AG04450 (cell line): ENCODE measurements at regions of chr15 and their contacts with region 1.

Region 1: DNA sequence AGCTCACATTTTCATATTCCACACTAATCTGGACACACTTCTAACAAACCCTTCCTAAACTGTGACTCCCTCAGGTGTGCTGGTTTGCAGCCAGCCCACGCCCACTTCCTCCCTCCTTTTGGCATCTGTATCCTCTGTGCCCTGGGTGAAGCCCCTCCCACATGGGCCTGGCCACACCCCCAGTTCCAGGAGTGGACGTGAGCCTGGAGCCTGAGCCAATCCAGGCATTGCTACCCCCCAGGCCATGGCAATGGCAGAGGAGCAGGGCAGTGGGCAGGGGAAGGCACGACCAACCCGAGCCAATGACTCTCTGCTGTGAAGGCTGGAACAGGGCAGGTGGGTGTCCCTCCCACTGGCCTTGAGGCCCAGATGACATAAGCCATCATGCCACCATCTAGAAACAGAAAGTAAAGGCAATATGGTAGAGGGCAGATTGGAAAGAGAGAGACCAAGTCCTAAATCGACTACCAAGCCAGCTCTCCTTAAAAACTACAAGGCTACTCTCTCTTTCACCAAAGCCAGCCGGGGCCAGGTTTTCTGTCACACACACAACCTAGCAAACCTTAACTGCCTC is 18.6 kb downstream of the FAM174B start:
- DNase-seq: no peak
- H3K4me3 ChIP-seq: no peak overlapping the region
- H3K27ac ChIP-seq: no peak overlapping the region
- H3K27me3 ChIP-seq: no peaks in the 10 kb centered on the region
- CTCF ChIP-seq: no peak

Region 2: DNA sequence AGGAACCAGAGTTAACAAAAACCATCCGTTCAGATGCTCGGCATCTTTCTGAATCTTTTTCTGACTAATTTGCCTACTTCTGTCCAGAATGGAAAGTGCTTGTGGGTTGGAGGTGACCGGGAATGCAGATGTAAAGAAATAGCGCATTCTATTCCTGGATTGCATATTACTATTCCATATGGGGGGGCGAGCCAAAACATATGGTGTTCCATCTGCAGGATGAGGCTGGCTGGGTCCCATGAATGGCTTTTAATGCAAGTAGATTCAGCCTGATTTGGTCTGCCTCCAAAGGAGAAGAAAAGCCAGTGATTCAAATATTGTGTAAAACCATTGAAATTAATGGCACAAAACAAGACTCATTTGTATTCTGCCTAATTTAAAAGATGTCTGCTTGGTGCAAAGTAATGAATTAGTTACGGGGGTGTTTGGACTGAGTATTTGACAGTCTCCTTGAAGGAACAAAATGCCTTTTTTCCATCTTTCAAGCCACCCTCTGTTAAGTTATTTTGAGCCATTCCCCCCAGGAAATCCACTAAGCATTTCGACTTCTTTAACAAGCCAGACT is 144.4 kb before region 1 on chr15:
- CTCF ChIA-PET with region 1: no interaction called
- POLR2A ChIA-PET with region 1: no interaction called
- DNase-seq: no peak
- H3K4me3 ChIP-seq: no peak overlapping the region
- H3K27ac ChIP-seq: no peak overlapping the region
- H3K27me3 ChIP-seq: peaks cover 4% of the 10 kb centered on the region
- CTCF ChIP-seq: no peak

Region 3: DNA sequence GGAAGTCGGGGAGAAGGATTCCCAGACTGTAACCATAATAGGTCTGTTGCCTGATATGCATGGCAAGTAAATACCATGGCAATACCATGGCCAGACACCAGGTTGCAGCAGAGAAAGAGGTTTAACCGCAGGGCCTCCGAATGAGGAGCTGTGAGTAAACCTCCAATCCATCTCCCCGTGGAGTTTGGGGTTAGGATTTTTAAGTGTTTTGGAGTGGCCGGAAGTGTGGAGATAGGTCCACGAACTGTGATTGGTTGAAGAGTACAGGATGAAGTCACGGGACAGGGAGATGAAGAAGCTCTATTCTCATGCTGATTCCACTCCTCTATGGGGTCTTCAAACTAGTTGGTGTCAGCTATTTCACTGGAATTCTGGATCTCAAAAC is 115.4 kb before region 1 on chr15:
- CTCF ChIA-PET with region 1: no interaction called
- POLR2A ChIA-PET with region 1: no interaction called
- DNase-seq: peak; percentile 55
- H3K4me3 ChIP-seq: no peak overlapping the region
- H3K27ac ChIP-seq: no peak overlapping the region
- H3K27me3 ChIP-seq: no peaks in the 10 kb centered on the region
- CTCF ChIP-seq: peak; percentile 79

Region 4: GRCh38 chr15:92603743-92604470 is 33.1 kb before region 1 on chr15:
- CTCF ChIA-PET with region 1: no interaction called
- POLR2A ChIA-PET with region 1: no interaction called
- DNase-seq: no peak
- H3K4me3 ChIP-seq: no peak overlapping the region
- H3K27ac ChIP-seq: no peak overlapping the region
- H3K27me3 ChIP-seq: no peaks in the 10 kb centered on the region
- CTCF ChIP-seq: no peak

Region 5: DNA sequence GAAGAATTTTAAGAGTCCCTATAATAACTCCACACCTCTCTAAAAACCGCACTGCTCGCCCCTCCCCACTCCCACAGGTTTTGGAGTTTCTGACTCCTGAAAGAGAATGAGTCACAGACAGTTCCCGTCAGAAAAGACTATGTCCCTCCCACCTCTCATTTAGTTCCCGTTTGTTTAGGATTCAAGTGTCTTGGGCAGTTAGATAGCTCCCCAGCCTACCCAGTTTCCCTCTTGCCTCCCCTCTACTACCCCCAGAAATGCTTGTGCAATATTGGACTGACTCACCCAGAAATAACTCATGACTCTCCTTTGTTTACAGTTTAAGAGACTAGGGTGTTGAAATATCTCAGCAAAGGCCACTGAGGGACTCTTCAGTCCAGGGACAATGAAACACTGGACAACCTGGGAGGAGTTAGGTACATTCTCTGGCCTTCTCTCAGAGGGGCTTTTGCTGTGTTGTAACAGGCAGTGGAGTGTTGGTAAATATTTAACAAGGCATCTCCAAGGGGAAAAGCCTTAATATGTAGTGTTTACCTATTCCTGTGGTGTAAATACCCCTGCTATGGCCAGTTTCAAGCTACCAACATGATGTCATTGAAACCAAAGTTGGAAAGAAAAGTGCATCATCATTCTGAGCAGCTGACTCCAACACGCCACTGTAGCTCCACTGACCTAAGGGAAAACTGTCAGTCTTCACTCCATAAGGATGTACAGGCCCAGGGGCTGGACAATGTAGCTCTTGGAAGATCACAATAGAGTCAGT is 167.0 kb after region 1 on chr15:
- CTCF ChIA-PET with region 1: no interaction called
- POLR2A ChIA-PET with region 1: interaction called, 10 read pairs
- DNase-seq: peak; percentile 100
- H3K4me3 ChIP-seq: no peak overlapping the region
- H3K27ac ChIP-seq: peak overlapping the region; percentile 99
- H3K27me3 ChIP-seq: no peaks in the 10 kb centered on the region
- CTCF ChIP-seq: no peak